AG04449 (cell line): ENCODE measurements at regions of chr6 and their contacts with region 1.

Region 1: DNA sequence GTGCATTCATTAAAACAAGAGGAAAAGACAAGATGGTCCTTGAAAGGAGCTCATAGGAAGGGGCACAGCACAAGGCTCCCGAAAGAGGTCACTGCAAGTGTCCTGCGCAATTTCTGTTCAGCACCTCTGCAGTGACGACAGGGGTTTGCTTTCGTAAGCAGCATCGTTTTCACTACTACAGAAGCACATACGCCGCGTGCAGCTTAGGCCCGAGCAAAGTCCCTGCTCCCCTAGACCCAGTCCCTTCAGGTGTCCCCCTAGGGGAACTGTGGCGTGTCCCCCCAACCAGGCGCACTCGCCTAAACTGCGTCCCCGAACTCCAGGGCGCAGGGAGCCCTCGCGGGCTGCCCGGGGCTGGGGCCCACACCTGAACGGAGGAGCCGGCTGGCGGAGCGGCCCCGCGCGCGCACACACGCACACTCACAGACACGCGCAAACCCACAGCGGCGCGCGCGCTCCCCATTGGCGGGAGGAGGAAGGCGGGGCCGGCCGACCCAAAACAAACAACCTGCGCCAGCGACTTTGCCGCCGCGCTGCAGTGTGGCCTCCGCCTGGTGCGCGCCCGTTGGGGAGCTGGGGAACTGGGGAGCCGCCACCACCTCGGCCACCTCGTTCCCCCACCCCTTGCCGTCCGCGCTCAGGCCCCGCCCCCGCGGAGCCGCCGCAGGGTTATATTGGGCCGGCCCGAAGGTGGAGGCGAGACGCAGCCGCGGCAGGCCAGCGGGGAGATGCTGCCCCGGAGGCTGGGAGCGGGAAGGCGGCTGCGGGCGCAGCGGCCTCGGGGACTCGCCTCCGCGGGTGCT is at the start of gene FOXQ1:
- DNase-seq: no peak
- H3K4me3 ChIP-seq: peak within 1 kb of the TSS; percentile 52
- CTCF ChIP-seq: no peak

Region 2: DNA sequence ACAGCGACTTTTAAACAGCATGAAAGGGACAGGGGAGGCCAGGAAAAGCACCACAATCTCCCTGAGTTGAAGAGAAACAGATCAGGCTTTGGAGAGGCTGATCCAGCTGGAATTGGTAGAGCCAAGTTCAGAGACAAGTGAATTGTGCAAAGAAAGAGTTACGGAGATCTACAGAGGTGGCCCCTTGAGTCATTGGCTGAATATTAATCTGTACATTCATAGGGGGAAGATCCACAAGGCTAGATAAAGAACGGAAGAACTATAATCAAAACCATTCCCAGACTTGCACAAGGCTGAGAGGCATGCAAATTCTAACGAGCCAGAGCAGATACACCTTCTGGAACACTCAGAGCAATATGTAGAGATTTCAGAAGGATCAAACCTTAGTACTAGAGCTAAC is 13.9 kb before region 1 on chr6:
- CTCF ChIA-PET with region 1: interaction called, 26 read pairs
- POLR2A ChIA-PET with region 1: no interaction called
- DNase-seq: peak; percentile 26
- H3K4me3 ChIP-seq: no peak overlapping the region
- CTCF ChIP-seq: no peak

Region 3: DNA sequence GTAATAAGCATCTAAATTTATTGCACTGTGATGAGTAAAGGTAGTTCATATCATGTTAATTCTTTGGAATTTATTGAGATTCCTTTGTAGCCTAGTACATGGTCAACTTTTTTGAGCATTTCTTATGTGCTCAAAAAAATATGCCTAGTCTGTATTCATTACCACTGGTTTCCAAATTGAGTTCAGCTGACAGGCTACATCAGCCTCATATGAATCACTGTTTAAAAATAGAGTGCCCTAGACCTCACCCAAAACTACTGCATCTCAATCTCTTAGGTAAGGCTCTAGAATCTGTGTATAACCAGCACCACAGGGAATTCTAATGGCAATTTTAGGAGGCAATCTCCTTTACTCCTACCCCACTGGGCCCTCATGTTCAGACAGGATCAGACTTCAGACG is 61.1 kb after region 1 on chr6:
- CTCF ChIA-PET with region 1: no interaction called
- POLR2A ChIA-PET with region 1: no interaction called
- DNase-seq: no peak
- H3K4me3 ChIP-seq: no peak overlapping the region
- CTCF ChIP-seq: no peak